AG04450 (cell line): ENCODE measurements at regions of chrX and their contacts with region 1.

Region 1: DNA sequence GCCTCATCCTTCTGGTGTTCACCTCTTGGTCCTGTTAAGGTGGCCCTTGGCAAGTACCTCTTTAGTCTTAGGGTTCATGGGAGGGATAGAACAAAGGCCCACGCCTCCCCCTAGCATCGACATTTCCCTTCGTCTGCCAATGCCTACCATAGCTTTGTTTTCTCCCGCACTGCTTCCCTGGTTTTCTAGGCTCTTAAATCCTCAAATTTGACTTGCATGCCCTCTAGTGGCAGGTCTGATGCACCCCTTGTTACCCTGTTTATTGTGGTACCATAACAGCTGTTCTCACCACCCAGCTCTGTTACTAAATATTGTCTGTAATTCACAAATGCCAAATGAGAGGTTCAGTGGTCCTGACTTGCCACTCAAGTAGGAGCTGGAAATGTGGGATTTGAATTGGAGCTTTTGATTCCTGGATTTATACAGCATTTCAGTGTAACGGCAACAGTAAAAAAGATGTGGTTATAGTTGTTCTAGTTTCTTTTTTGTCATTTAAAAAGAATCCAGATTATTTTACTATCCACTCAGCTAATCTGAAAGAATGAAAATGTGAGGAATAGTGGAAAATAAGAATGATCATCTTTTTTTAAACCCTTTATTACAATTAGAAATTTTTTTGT is 100.1 kb downstream of the REPS2 start:
- DNase-seq: peak; percentile 39
- H3K4me3 ChIP-seq: no peak overlapping the region
- H3K27ac ChIP-seq: no peak overlapping the region
- H3K27me3 ChIP-seq: no peaks in the 10 kb centered on the region
- CTCF ChIP-seq: peak; percentile 78

Region 2: DNA sequence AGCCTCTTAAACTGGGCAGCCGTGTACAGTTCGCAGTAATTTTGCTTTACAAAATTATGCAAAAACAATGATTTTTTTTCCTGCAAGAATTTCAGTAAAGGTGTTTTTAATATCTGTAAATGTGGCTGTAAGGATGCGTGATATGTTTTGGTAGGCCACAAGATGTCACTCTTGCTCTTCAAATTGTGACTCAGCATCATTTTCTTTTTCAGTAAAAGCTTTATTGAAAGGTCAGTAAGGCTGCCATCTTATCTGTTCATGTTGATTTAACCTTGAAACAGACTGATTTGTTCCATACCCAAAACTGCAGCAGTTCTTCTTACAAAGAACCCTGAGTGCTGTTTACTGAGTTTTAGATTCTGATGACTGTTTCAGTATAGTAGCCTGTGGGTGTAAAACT is 220.4 kb before region 1 on chrX:
- CTCF ChIA-PET with region 1: interaction called, 126 read pairs
- POLR2A ChIA-PET with region 1: no interaction called
- DNase-seq: no peak
- H3K4me3 ChIP-seq: no peak overlapping the region
- H3K27ac ChIP-seq: no peak overlapping the region
- H3K27me3 ChIP-seq: no peaks in the 10 kb centered on the region
- CTCF ChIP-seq: peak; percentile 51

Region 3: DNA sequence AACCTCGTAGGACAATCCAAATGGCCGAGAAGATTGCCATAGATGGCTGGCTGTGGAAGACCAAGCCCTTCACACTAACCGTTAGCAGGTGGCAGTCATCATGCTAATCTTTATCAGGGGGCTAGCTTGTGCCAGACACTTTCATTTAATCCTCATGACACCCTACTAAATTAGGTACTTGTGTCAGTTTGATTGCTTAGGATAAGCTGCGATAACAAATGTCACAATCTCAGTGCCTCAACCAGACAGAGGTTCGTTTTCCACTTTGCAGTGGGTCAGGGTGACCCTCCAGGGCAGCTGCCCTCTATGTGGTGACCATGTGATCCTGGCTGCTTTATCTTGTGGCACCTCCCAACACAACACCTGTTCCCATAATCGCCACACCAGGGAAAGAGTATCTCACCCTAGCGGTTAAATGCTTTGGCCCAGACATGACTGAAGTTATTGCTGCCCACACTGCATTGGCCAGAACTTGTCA is 39.3 kb before region 1 on chrX:
- CTCF ChIA-PET with region 1: interaction called, 23 read pairs
- POLR2A ChIA-PET with region 1: no interaction called
- DNase-seq: no peak
- H3K4me3 ChIP-seq: no peak overlapping the region
- H3K27ac ChIP-seq: no peak overlapping the region
- H3K27me3 ChIP-seq: no peaks in the 10 kb centered on the region
- CTCF ChIP-seq: peak; percentile 50

Region 4: GRCh38 chrX:17032351-17032750 is 14.2 kb before region 1 on chrX:
- CTCF ChIA-PET with region 1: interaction called, 20 read pairs
- POLR2A ChIA-PET with region 1: no interaction called
- DNase-seq: no peak
- H3K4me3 ChIP-seq: no peak overlapping the region
- H3K27ac ChIP-seq: no peak overlapping the region
- H3K27me3 ChIP-seq: no peaks in the 10 kb centered on the region
- CTCF ChIP-seq: no peak